B cell (primary cell): ENCODE measurements at regions of chrX and their contacts with region 1.

Region 1: GRCh38 chrX:10083809-10084208 is 73.0 kb upstream of the CLCN4 start:
- DNase-seq: no peak
- ATAC-seq: no peak
- H3K4me3 ChIP-seq: peak overlapping the region in 1 of 5 experiments; percentile 41
- H3K4me3 Mint-ChIP-seq: peak overlapping the region; percentile 80
- H3K27ac ChIP-seq: peak overlapping the region; percentile 76 to 78
- H3K27ac Mint-ChIP-seq: peak overlapping the region; percentile 60
- H3K4me1 ChIP-seq: peaks cover 25 to 40% of the 10 kb centered on the region in 2 donors
- H3K4me1 Mint-ChIP-seq: peaks cover 52% of the 10 kb centered on the region
- H3K27me3 ChIP-seq: no peaks in the 10 kb centered on the region
- H3K27me3 Mint-ChIP-seq: no peaks in the 10 kb centered on the region
- CTCF ChIP-seq: no peak

Region 2: DNA sequence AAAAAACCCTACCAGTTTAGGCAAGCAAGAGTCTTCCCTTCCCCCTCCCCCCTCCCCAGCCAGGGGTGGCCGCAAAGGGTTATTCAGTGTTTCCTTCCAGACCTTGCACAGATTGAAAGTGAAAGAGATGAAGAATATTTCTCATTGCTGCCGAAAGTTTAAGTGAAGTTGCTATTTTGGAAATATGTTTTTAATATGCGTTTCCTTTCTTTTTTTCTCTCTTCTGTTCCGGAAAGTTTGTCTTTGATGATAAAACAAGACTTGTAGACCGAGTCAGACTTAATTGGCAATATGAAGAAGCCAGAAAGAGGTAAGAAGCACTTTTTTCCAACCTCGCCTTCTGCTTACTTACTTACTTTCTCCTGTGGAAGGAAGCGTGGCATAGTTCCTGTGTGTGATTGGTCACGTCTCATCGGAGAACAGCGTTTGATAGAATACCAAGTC is 14.5 kb after region 1 on chrX:
- CTCF ChIA-PET with region 1: interaction called, 7 read pairs
- POLR2A ChIA-PET with region 1: interaction called, 3 read pairs
- intact Hi-C with region 1: loop called (anchors 2 kb)
- DNase-seq: peak; percentile 74
- ATAC-seq: peak; percentile 81
- H3K4me3 ChIP-seq: peak overlapping the region; percentile 32 to 64 (median 51)
- H3K4me3 Mint-ChIP-seq: peak overlapping the region; percentile 93
- H3K27ac ChIP-seq: peak overlapping the region; percentile 65 to 80
- H3K27ac Mint-ChIP-seq: peak overlapping the region; percentile 92
- H3K4me1 ChIP-seq: peaks cover 22 to 64% of the 10 kb centered on the region in 2 donors
- H3K4me1 Mint-ChIP-seq: peaks cover 60% of the 10 kb centered on the region
- H3K27me3 ChIP-seq: no peaks in the 10 kb centered on the region
- H3K27me3 Mint-ChIP-seq: no peaks in the 10 kb centered on the region
- CTCF ChIP-seq: no peak

Region 3: GRCh38 chrX:10130354-10130753 is 46.5 kb after region 1 on chrX:
- CTCF ChIA-PET with region 1: no interaction called
- POLR2A ChIA-PET with region 1: no interaction called
- intact Hi-C with region 1: no loop called
- DNase-seq: no peak
- ATAC-seq: no peak
- H3K4me3 ChIP-seq: no peak overlapping the region
- H3K4me3 Mint-ChIP-seq: no peak overlapping the region
- H3K27ac ChIP-seq: no peak overlapping the region
- H3K27ac Mint-ChIP-seq: no peak overlapping the region
- H3K4me1 ChIP-seq: no peaks in the 10 kb centered on the region
- H3K4me1 Mint-ChIP-seq: peaks cover 7% of the 10 kb centered on the region
- H3K27me3 ChIP-seq: no peaks in the 10 kb centered on the region
- H3K27me3 Mint-ChIP-seq: no peaks in the 10 kb centered on the region
- CTCF ChIP-seq: no peak